Activated naive CD4-positive, alpha-beta T cell treated with anti-CD3 and anti-CD28 coated beads, Interleukin-2, amount 10 ng/mL, durations not matched to agents 7 days and 5 days (primary cell): ENCODE measurements at regions of chr2 and their contacts with region 1.

Region 1: DNA sequence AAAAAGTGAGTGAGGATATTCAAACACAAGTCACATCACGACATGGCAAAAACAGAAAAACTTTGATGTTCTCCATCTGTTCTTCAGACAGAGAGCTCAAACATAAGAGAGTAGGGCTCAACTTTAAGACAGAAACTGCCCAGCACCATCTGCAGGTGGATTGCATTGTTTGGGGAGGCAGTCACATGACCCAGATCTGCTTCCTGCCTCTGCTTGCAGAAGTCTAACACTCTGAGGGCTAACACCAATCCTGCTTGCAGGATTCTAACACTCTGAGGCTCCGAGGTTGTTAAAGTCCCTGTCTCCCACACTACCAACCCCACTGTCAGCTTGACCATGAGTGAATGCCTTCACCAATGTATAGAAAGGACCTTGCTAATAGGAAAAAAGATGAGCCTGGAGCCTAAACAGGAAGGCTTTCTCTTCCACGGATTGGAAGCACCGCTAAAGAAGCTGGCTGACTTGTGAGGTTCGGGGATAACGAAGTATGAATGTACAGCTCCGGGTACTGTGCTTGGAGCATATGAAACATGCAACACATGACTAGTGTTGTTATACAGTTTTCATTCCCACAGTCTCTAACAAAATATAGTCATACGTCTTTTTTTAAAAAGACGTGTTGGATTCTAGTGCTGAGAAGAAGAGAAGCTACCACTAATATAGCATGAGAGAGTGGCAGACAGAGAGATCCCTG is 176.6 kb upstream of the CREB1 start:
- DNase-seq: peak; percentile 62
- H3K4me3 Mint-ChIP-seq: no peak overlapping the region
- H3K27ac Mint-ChIP-seq: peak overlapping the region; percentile 49
- H3K4me1 Mint-ChIP-seq: peaks cover 12% of the 10 kb centered on the region
- H3K27me3 Mint-ChIP-seq: peaks cover 4% of the 10 kb centered on the region

Region 2: GRCh38 chr2:206800506-206801417 is 552.4 kb before region 1 on chr2:
- CTCF ChIA-PET with region 1: interaction called, 13 read pairs
- DNase-seq: peak; percentile 67
- H3K4me3 Mint-ChIP-seq: peak overlapping the region; percentile 58
- H3K27ac Mint-ChIP-seq: no peak overlapping the region
- H3K4me1 Mint-ChIP-seq: peaks cover 18% of the 10 kb centered on the region
- H3K27me3 Mint-ChIP-seq: no peaks in the 10 kb centered on the region

Region 3: DNA sequence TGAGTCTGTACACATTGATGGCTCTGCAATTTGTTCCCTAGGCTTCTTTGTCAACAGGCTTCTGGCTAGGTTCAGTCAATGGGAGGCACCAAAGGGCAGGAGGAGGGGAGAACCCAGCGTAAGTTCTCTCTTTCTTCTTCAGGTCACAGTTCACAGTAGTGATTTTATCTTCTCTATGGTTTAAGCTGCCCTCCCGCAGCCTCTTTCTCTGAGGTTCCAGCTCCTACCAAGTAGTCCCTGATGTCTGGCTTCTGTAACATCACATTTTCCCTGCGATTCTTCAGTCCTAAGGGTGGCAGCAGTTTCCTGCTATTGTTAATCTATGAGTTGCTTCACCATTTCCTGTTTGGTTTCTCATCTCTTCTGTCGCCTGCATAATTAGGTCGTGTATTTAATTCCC is 306.4 kb before region 1 on chr2:
- CTCF ChIA-PET with region 1: interaction called, 11 read pairs
- DNase-seq: peak; percentile 43
- H3K4me3 Mint-ChIP-seq: no peak overlapping the region
- H3K27ac Mint-ChIP-seq: no peak overlapping the region
- H3K4me1 Mint-ChIP-seq: peaks cover 14% of the 10 kb centered on the region
- H3K27me3 Mint-ChIP-seq: peaks cover 4% of the 10 kb centered on the region

Region 4: DNA sequence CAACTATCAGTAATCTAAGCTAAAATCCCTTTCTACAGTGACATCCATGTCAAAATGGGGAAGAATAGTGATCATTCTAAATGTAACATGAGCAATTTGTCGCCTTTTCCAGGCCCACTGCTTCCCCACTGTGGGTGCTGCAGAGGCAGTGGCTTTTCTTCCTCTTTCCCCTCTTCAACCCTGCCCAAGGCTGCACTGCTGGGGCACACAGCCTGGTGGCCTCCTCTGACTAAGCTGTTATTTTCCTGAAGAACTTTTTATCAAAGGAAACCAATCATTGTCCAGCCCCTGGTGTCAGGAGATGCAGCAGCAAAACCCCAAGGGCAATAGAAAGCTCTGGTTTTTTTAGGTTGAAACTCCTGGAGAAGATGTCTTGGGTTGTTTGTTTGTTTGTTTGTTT is 69.8 kb before region 1 on chr2:
- CTCF ChIA-PET with region 1: interaction called, 10 read pairs
- DNase-seq: peak; percentile 24
- H3K4me3 Mint-ChIP-seq: peak overlapping the region; percentile 54
- H3K27ac Mint-ChIP-seq: peak overlapping the region; percentile 86
- H3K4me1 Mint-ChIP-seq: peaks cover 24% of the 10 kb centered on the region
- H3K27me3 Mint-ChIP-seq: no peaks in the 10 kb centered on the region

Region 5: DNA sequence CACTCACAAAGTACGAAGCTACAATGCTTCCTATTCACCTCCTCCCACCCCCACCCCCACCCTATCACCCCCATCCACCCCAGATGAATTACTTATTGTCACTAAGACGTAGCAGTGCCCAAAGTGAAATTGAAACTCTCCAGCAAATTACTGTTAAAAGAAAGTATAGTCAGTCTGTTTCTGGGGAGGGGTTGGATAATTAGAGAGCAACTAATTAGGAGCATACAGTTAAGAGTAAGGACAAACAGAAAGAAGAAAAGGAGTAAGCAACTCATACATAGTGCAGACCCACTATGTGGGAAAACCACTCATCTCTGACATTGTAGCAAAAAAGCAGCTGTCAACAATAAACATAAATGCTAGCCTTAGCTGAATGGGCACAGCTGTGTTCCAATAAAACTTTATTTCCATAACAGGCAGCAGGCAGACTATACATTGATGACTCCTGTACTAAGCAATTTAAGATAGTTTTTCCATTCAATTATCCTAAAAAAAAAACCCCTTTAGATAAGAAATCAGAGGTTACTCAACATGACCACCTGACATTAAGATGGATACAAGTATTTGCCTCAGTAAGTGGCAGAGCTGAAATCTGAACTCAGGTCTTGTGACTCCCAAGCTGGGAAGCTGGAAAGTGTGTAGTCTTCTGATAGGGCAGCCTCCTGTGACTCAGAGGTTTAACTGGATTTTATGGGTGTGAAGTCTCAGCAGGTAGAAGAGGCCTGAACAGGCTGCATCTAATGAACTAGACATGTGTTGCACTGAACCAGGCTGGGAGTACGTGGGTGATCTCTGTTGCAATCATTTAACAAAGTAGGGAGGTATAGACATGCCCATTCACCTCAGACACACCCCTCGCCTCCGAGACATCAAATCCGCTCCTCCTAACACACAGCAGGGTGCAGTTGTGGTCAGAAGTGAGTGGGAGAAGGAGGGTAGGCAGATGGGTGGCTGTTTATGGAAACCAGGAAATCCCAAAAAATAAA is 15.6 kb before region 1 on chr2:
- CTCF ChIA-PET with region 1: interaction called, 12 read pairs
- DNase-seq: no peak
- H3K4me3 Mint-ChIP-seq: no peak overlapping the region
- H3K27ac Mint-ChIP-seq: peak overlapping the region; percentile 47
- H3K4me1 Mint-ChIP-seq: peaks cover 45% of the 10 kb centered on the region
- H3K27me3 Mint-ChIP-seq: no peaks in the 10 kb centered on the region

Region 6: DNA sequence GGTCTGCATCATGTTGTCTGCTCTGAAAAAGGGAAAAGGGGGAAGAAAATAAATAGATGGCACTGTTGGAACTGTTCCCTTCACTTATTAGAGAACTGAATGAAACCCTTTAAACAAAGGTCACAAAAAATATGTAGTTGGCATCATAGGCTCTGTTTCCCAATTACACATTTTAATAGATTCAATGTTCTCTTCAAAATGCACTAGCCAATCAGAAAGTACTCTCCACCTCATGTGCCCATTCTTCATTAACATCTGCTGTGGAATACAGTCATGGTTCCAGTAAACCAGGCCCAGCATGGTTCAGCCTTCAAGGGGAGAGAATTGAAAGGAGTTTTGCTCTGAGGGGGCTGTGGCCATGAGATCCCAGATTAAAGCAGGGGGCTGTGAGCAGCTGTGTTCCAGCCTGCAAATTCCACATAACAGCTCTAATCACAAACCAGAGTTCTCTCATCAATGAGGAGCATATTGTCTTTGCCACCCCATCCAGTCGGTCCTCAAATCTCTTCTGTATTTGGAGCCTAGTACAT is 10.7 kb after region 1 on chr2:
- CTCF ChIA-PET with region 1: no interaction called
- DNase-seq: no peak
- H3K4me3 Mint-ChIP-seq: no peak overlapping the region
- H3K27ac Mint-ChIP-seq: no peak overlapping the region
- H3K4me1 Mint-ChIP-seq: no peaks in the 10 kb centered on the region
- H3K27me3 Mint-ChIP-seq: peaks cover 6% of the 10 kb centered on the region

Region 7: GRCh38 chr2:207375192-207375861 is 22.2 kb after region 1 on chr2:
- CTCF ChIA-PET with region 1: no interaction called
- DNase-seq: no peak
- H3K4me3 Mint-ChIP-seq: no peak overlapping the region
- H3K27ac Mint-ChIP-seq: no peak overlapping the region
- H3K4me1 Mint-ChIP-seq: no peaks in the 10 kb centered on the region
- H3K27me3 Mint-ChIP-seq: no peaks in the 10 kb centered on the region